Naive thymus-derived CD4-positive, alpha-beta T cell (primary cell): ENCODE measurements at regions of chr1 and their contacts with region 1.

Region 1: GRCh38 chr1:172180501-172181285 is 239.8 kb upstream of the C1orf105 start:
- DNase-seq: peak in 8 of 9 donors; percentile 18 to 50 (median 40)
- ATAC-seq: peak; percentile 72
- H3K4me3 ChIP-seq: peak overlapping the region; percentile 56
- H3K4me3 Mint-ChIP-seq: peak overlapping the region; percentile 61 to 91 (median 82)
- H3K27ac ChIP-seq: peak overlapping the region; percentile 80
- H3K27ac Mint-ChIP-seq: peak overlapping the region; percentile 95 to 99 (median 97)
- H3K4me1 ChIP-seq: peaks cover 21 to 23% of the 10 kb centered on the region in 2 donors
- H3K4me1 Mint-ChIP-seq: peaks cover 26 to 59% (median 45%) of the 10 kb centered on the region in 7 donors
- H3K27me3 ChIP-seq: no peaks in the 10 kb centered on the region
- H3K27me3 Mint-ChIP-seq: no peaks in the 10 kb centered on the region

Region 2: GRCh38 chr1:172089768-172090510 is 90.8 kb before region 1 on chr1:
- CTCF ChIA-PET with region 1: no interaction called
- POLR2A ChIA-PET with region 1: interaction called, 4 read pairs
- intact Hi-C with region 1: loop called (anchors 1 to 5 kb)
- DNase-seq: peak; percentile 25 to 61 (median 46)
- ATAC-seq: peak; percentile 86
- H3K4me3 ChIP-seq: no peak overlapping the region
- H3K4me3 Mint-ChIP-seq: peak overlapping the region in 3 of 10 donors; percentile 9 to 35 (median 24)
- H3K27ac ChIP-seq: no peak overlapping the region
- H3K27ac Mint-ChIP-seq: peak overlapping the region in 4 of 9 donors; percentile 1 to 72 (median 50)
- H3K4me1 ChIP-seq: no peaks in the 10 kb centered on the region
- H3K4me1 Mint-ChIP-seq: peaks cover 0 to 7% (median 6%) of the 10 kb centered on the region in 7 donors
- H3K27me3 ChIP-seq: no peaks in the 10 kb centered on the region
- H3K27me3 Mint-ChIP-seq: peaks cover 0 to 7% (median 0%) of the 10 kb centered on the region in 5 donors

Region 3: GRCh38 chr1:172154551-172154950 is 26.1 kb before region 1 on chr1:
- CTCF ChIA-PET with region 1: no interaction called
- POLR2A ChIA-PET with region 1: no interaction called
- intact Hi-C with region 1: loop called (anchors 1 kb)
- DNase-seq: peak in 1 of 9 donors; percentile 3
- ATAC-seq: no peak
- H3K4me3 ChIP-seq: no peak overlapping the region
- H3K4me3 Mint-ChIP-seq: peak overlapping the region in 4 of 10 donors; percentile 2 to 61 (median 12)
- H3K27ac ChIP-seq: no peak overlapping the region
- H3K27ac Mint-ChIP-seq: peak overlapping the region in 8 of 9 donors; percentile 1 to 90 (median 36)
- H3K4me1 ChIP-seq: no peaks in the 10 kb centered on the region
- H3K4me1 Mint-ChIP-seq: peaks cover 4 to 8% (median 6%) of the 10 kb centered on the region in 7 donors
- H3K27me3 ChIP-seq: no peaks in the 10 kb centered on the region
- H3K27me3 Mint-ChIP-seq: no peaks in the 10 kb centered on the region

Region 4: DNA sequence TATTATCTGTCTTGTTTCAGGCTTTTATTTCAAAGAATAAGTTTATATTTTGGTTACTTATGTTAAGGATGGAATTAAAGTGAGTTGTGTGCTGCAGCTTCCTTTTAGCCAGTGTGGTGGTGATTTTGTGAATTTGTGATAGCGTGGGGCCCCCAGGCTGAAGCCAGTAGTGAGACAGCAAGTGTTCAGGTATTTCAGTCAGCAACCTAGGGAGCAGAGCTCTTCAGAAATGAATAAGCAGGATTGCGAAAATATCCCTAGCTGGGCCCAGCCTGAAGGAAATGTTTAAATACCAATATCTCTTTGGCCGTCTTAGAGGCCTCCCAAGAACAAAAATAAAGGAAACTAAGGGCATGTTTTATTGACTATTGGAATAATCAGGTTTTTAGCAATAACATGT is 89.0 kb after region 1 on chr1:
- CTCF ChIA-PET with region 1: no interaction called
- POLR2A ChIA-PET with region 1: no interaction called
- intact Hi-C with region 1: loop called in 1 of 2 experiments (anchors 5 kb)
- DNase-seq: no peak
- ATAC-seq: no peak
- H3K4me3 ChIP-seq: no peak overlapping the region
- H3K4me3 Mint-ChIP-seq: peak overlapping the region in 1 of 10 donors; percentile 18
- H3K27ac ChIP-seq: no peak overlapping the region
- H3K27ac Mint-ChIP-seq: peak overlapping the region in 2 of 9 donors; percentile 31 to 71
- H3K4me1 ChIP-seq: no peaks in the 10 kb centered on the region
- H3K4me1 Mint-ChIP-seq: peaks cover 0 to 43% (median 0%) of the 10 kb centered on the region in 7 donors
- H3K27me3 ChIP-seq: no peaks in the 10 kb centered on the region
- H3K27me3 Mint-ChIP-seq: no peaks in the 10 kb centered on the region

Region 5: DNA sequence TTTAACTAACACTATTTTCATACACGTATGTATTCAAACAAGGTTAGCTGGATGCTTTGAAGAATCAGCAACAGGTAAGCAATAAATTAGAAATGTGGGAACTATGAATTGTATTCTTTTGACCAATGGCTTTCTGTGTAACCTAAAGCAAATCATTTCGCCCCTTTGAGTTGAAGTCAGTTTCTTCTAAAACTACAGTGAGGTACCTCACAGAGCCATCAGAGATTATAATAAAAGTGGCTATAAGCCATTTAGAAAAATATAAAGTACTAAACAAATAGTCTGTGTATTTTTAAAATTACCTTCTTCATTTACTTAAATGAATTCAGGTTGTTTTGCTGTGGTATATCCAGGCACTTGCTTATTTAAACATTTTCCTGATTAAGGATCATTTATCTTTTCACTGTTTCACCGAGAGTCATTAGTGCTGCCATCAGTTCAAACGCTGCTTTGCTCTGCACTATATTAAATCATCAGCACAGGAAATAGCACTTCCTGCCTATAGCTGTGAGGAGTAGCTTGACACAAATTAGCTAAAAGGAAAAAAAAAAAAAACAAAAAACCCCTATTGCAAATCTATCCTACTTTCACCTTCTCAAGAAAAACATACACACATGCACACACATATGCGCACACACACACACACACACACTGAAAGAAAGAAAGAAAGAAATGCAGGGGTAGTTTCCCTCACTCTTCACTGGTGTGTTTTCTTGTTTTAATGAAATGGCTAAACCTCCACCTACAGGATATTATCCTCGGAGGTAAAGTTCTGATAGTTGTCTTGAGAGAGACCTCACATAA is 199.9 kb after region 1 on chr1:
- CTCF ChIA-PET with region 1: interaction called, 6 read pairs
- POLR2A ChIA-PET with region 1: no interaction called
- intact Hi-C with region 1: loop called (anchors 1 kb)
- DNase-seq: peak in 7 of 9 donors; percentile 49 to 82 (median 70)
- ATAC-seq: peak; percentile 96
- H3K4me3 ChIP-seq: peak overlapping the region; percentile 32
- H3K4me3 Mint-ChIP-seq: peak overlapping the region; percentile 53 to 82 (median 76)
- H3K27ac ChIP-seq: peak overlapping the region; percentile 76
- H3K27ac Mint-ChIP-seq: peak overlapping the region; percentile 86 to 94 (median 93)
- H3K4me1 ChIP-seq: peaks cover 10 to 18% of the 10 kb centered on the region in 2 donors
- H3K4me1 Mint-ChIP-seq: peaks cover 12 to 57% (median 49%) of the 10 kb centered on the region in 7 donors
- H3K27me3 ChIP-seq: no peaks in the 10 kb centered on the region
- H3K27me3 Mint-ChIP-seq: peaks cover 0 to 3% (median 0%) of the 10 kb centered on the region in 5 donors